Naive thymus-derived CD4-positive, alpha-beta T cell (primary cell): ENCODE measurements at regions of chr2 and their contacts with region 1.

Region 1: GRCh38 chr2:127884436-127885345 is 1.1 kb downstream of the AMMECR1L start:
- DNase-seq: peak in 1 of 9 donors; percentile 7
- ATAC-seq: no peak
- H3K4me3 ChIP-seq: peak overlapping the region; percentile 43
- H3K4me3 Mint-ChIP-seq: peak overlapping the region; percentile 78 to 100 (median 92)
- H3K27ac ChIP-seq: peak overlapping the region; percentile 55
- H3K27ac Mint-ChIP-seq: peak overlapping the region; percentile 75 to 94 (median 89)
- H3K4me1 ChIP-seq: peaks cover 15 to 24% of the 10 kb centered on the region in 2 donors
- H3K4me1 Mint-ChIP-seq: peaks cover 36 to 73% (median 66%) of the 10 kb centered on the region in 7 donors
- H3K27me3 ChIP-seq: no peaks in the 10 kb centered on the region
- H3K27me3 Mint-ChIP-seq: no peaks in the 10 kb centered on the region

Region 2: DNA sequence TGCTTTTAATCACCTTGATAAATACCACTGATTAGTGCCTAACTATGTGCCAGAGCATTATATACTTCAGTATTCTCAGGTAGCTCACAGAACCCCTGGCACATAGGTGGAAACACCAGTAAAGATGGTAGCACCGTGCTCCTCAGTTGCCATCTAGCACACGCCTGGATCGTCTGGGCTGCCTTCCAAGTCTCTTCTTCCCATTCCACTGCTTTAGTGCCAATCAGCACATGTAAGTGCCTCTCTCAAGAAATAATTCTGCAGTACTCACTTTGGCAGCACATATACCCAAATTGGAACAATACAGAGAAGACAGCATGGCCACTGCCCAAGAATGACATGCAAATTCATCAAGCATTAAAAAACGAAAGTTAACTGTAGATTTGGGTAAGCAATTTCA is 39.7 kb before region 1 on chr2:
- CTCF ChIA-PET with region 1: no interaction called
- POLR2A ChIA-PET with region 1: no interaction called
- intact Hi-C with region 1: no loop called
- DNase-seq: no peak
- ATAC-seq: no peak
- H3K4me3 ChIP-seq: no peak overlapping the region
- H3K4me3 Mint-ChIP-seq: no peak overlapping the region
- H3K27ac ChIP-seq: no peak overlapping the region
- H3K27ac Mint-ChIP-seq: peak overlapping the region in 1 of 9 donors; percentile 28
- H3K4me1 ChIP-seq: no peaks in the 10 kb centered on the region
- H3K4me1 Mint-ChIP-seq: peaks cover 0 to 10% (median 5%) of the 10 kb centered on the region in 7 donors
- H3K27me3 ChIP-seq: no peaks in the 10 kb centered on the region
- H3K27me3 Mint-ChIP-seq: no peaks in the 10 kb centered on the region

Region 3: GRCh38 chr2:127901339-127902056 is 16.8 kb after region 1 on chr2:
- CTCF ChIA-PET with region 1: no interaction called
- POLR2A ChIA-PET with region 1: no interaction called
- intact Hi-C with region 1: no loop called
- DNase-seq: no peak
- ATAC-seq: no peak
- H3K4me3 ChIP-seq: no peak overlapping the region
- H3K4me3 Mint-ChIP-seq: no peak overlapping the region
- H3K27ac ChIP-seq: no peak overlapping the region
- H3K27ac Mint-ChIP-seq: no peak overlapping the region
- H3K4me1 ChIP-seq: no peaks in the 10 kb centered on the region
- H3K4me1 Mint-ChIP-seq: peaks cover 0 to 3% (median 0%) of the 10 kb centered on the region in 7 donors
- H3K27me3 ChIP-seq: no peaks in the 10 kb centered on the region
- H3K27me3 Mint-ChIP-seq: peaks cover 0 to 15% (median 2%) of the 10 kb centered on the region in 5 donors

Region 4: DNA sequence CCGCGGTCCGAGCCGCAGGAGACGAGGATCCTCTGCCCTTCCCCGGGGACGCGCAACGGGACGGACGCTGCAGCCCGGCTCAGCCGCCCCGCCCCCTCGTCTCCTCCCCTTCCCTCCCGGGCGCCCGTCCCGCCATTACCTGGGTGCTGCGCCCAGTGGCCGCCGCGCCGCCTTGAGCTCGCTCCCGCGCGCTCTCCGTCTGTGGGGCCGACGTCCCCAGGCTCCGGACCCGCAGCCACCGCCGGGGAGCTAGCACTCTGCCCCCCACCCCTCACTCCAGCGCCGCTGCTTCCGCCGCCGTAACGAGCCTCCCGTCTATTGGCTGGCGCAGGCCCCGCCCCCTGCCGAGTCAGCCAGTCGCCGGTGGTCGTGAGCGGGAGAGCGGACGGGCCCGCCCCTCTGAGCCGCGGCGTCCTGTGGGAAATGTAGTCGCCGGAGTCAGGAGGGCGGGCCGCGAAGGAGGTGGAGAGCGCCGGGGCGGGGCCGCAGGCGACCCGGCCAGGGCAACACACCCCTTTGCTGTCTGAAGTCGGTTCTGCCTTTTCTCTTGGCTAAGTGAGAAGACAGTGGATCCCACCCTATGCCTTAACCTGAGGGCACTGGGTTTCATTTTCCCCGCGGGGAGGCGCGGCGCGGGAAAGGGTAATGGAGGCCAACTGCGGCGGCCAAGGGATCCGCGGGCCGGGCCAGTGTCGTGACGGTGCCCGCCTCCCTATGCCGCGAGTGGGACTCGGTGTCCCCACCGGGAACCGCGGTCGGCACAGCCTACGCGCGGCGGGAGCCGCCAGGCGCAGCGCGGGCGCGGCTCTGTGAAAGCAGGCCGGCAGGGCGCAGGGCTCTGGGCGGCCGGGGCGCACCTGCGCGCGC is 143.3 kb after region 1 on chr2 and contains the start of gene SAP130:
- CTCF ChIA-PET with region 1: no interaction called
- POLR2A ChIA-PET with region 1: no interaction called
- intact Hi-C with region 1: loop called (anchors 1 to 5 kb)
- DNase-seq: peak; percentile 96 to 99 (median 98)
- ATAC-seq: peak; percentile 86
- H3K4me3 ChIP-seq: peak within 1 kb of the TSS; percentile 86
- H3K4me3 Mint-ChIP-seq: peak within 1 kb of the TSS; percentile 87 to 98 (median 98)
- H3K27ac ChIP-seq: peak within 1 kb of the TSS; percentile 91
- H3K27ac Mint-ChIP-seq: peak within 1 kb of the TSS; percentile 52 to 97 (median 93)
- H3K4me1 ChIP-seq: peaks cover 0 to 14% of the 10 kb centered on the region in 2 donors
- H3K4me1 Mint-ChIP-seq: peaks cover 14 to 32% (median 28%) of the 10 kb centered on the region in 7 donors
- H3K27me3 ChIP-seq: no peaks in the 10 kb centered on the region
- H3K27me3 Mint-ChIP-seq: peaks cover 0 to 16% (median 0%) of the 10 kb centered on the region in 5 donors
- total RNA-seq, gene SAP130: 29.9 to 38.0 (median 30.9) TPM